Panc1 (cell line): ENCODE measurements at regions of chr6 and their contacts with region 1.

Region 1: GRCh38 chr6:21188505-21189223 is 404.9 kb upstream of the SOX4 start:
- DNase-seq: no peak
- ATAC-seq: no peak
- H3K4me3 ChIP-seq: no peak overlapping the region
- H3K27ac ChIP-seq: no peak overlapping the region
- H3K4me1 ChIP-seq: no peaks in the 10 kb centered on the region
- H3K27me3 ChIP-seq: no peaks in the 10 kb centered on the region
- CTCF ChIP-seq: no peak

Region 2: DNA sequence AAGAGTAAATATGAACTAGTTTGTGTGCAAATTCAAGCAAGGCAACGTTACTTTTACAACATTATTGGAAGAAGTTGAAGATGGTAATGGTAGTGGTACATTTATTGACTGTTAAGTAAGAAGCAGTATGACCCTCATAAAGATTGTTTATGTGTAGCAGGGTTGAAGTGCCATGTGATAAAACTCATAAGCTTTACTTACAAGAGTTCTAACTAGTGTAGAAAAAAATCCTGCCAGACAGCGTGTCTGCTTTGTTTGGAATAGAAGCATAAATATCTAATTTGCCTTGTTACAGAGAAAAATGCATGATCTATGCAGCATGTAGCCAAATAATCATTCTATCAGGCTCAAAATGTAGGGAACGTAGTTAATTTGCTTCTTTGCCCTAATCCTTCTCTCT is 45.9 kb before region 1 on chr6:
- CTCF ChIA-PET with region 1: no interaction called
- POLR2A ChIA-PET with region 1: interaction called, 12 read pairs
- in situ Hi-C with region 1: no loop called
- intact Hi-C with region 1: no loop called
- DNase-seq: no peak
- ATAC-seq: no peak
- H3K4me3 ChIP-seq: no peak overlapping the region
- H3K27ac ChIP-seq: no peak overlapping the region
- H3K4me1 ChIP-seq: no peaks in the 10 kb centered on the region
- H3K27me3 ChIP-seq: no peaks in the 10 kb centered on the region
- CTCF ChIP-seq: no peak

Region 3: DNA sequence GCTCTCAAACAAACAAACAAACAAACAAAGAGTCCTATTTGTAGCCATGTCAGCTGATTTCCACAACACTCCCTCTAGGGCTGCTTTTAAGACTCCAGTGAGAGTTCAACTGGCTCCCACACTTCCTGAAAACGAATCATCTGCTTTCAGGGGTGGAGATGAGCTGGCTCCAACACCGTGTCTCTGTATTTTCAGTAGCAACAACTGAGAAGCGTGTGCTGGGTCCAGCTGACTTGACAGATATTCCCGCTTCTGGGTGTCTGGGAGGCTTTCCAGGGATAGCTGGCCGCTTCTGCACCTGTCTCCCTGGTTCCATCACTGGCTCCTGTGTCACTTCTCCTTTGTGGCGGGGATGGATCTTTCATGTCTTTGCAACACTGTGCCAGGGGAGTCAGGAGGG is 132.4 kb after region 1 on chr6:
- CTCF ChIA-PET with region 1: no interaction called
- POLR2A ChIA-PET with region 1: no interaction called
- in situ Hi-C with region 1: no loop called
- intact Hi-C with region 1: no loop called
- DNase-seq: no peak
- ATAC-seq: no peak
- H3K4me3 ChIP-seq: no peak overlapping the region
- H3K27ac ChIP-seq: no peak overlapping the region
- H3K4me1 ChIP-seq: no peaks in the 10 kb centered on the region
- H3K27me3 ChIP-seq: no peaks in the 10 kb centered on the region
- CTCF ChIP-seq: no peak